ENCODE measurements at regions of chr6 and their contacts with region 1.

Region 1: GRCh38 chr6:31580807-31581433 is 1.3 kb downstream of the LTB start:
- DNase-seq: peak; percentile 90
- ATAC-seq: peak; percentile 72
- H3K4me3 Mint-ChIP-seq: peak overlapping the region; percentile 92
- H3K27ac Mint-ChIP-seq: peak overlapping the region; percentile 10; the same call in 1 of the 2 replicates
- H3K4me1 Mint-ChIP-seq: peaks cover 38% of the 10 kb centered on the region
- H3K27me3 Mint-ChIP-seq: peaks cover 48% of the 10 kb centered on the region
- CTCF ChIP-seq: peak; percentile 95

Region 2: GRCh38 chr6:31546962-31547726 is 33.8 kb before region 1 on chr6 and contains the start of gene NFKBIL1:
- CTCF ChIA-PET with region 1: interaction called, 52 read pairs
- POLR2A ChIA-PET with region 1: interaction called, 5 read pairs
- DNase-seq: peak; percentile 94
- ATAC-seq: peak; percentile 67
- H3K4me3 Mint-ChIP-seq: peak within 1 kb of the TSS; percentile 82
- H3K27ac Mint-ChIP-seq: peak within 1 kb of the TSS; percentile 98
- H3K4me1 Mint-ChIP-seq: peaks cover 22% of the 10 kb centered on the region
- H3K27me3 Mint-ChIP-seq: no peaks in the 10 kb centered on the region
- CTCF ChIP-seq: no peak
- total RNA-seq, gene NFKBIL1: 14.9 to 19.5 TPM (median 17.1 TPM) in 3 replicates

Region 3: GRCh38 chr6:31568537-31568961 is 12.4 kb before region 1 on chr6:
- CTCF ChIA-PET with region 1: interaction called, 36 read pairs
- POLR2A ChIA-PET with region 1: no interaction called
- DNase-seq: no peak
- ATAC-seq: no peak
- H3K4me3 Mint-ChIP-seq: no peak overlapping the region
- H3K27ac Mint-ChIP-seq: no peak overlapping the region
- H3K4me1 Mint-ChIP-seq: peaks cover 8% of the 10 kb centered on the region
- H3K27me3 Mint-ChIP-seq: peaks cover 5% of the 10 kb centered on the region
- CTCF ChIP-seq: no peak

Region 4: GRCh38 chr6:31609519-31610406 is 28.8 kb after region 1 on chr6:
- CTCF ChIA-PET with region 1: interaction called, 11 read pairs
- POLR2A ChIA-PET with region 1: no interaction called
- DNase-seq: no peak
- ATAC-seq: no peak
- H3K4me3 Mint-ChIP-seq: no peak overlapping the region
- H3K27ac Mint-ChIP-seq: no peak overlapping the region
- H3K4me1 Mint-ChIP-seq: peaks cover 10% of the 10 kb centered on the region
- H3K27me3 Mint-ChIP-seq: peaks cover 6% of the 10 kb centered on the region; the same call in 1 of the 2 replicates
- CTCF ChIP-seq: no peak

Region 5: DNA sequence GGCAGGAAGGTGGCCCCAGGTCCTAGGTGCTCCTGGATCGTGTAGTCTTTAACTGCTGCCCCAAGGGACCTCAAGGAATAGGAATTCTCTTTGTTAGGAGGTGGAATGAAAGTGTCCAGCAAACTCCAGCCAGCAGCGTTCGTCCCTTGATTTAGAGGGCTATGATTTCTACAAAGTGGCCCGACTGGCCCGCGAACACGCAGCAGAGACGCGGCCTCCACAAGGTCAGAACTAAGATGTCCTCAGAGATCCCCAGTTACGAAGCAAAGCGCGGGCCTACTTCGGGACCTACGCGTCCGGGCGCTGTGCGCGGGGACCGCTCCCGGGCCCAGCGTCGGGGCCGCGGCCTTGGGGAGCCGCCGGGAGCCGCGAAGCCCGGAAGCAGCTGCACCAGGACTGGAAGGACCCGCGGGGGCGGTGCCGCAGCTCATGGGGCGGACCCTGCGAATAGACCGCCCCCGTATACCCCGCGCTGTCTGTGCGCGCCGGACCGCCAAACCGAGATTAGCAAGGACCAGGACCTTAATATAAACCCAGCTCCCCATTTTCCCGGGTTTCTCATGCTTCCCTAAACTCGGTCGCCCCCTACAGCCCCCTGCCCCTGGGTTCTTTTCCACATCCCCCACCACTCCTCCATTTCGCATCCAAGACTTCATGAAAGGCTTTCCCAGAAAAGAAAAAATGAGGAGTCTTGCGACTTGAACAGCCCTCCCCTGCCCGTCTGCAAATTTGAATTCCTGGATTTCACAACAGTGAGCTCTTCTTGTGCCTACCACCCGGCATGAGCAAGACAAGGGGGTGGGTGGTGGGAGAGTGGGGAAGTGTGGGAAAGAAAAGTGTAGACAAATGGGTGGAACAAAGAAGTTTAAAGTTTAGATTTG is 79.7 kb after region 1 on chr6 and contains the start of gene C6orf47:
- CTCF ChIA-PET with region 1: interaction called, 13 read pairs
- POLR2A ChIA-PET with region 1: no interaction called
- DNase-seq: peak; percentile 89
- ATAC-seq: peak; percentile 83
- H3K4me3 Mint-ChIP-seq: peak within 1 kb of the TSS; percentile 89
- H3K27ac Mint-ChIP-seq: peak within 1 kb of the TSS; percentile 91
- H3K4me1 Mint-ChIP-seq: peaks cover 38% of the 10 kb centered on the region
- H3K27me3 Mint-ChIP-seq: no peaks in the 10 kb centered on the region
- CTCF ChIP-seq: no peak
- total RNA-seq, gene C6orf47: 14.0 to 16.3 TPM (median 14.3 TPM) in 3 replicates